AG04449 (cell line): ENCODE measurements at regions of chr12 and their contacts with region 1.

Region 1: DNA sequence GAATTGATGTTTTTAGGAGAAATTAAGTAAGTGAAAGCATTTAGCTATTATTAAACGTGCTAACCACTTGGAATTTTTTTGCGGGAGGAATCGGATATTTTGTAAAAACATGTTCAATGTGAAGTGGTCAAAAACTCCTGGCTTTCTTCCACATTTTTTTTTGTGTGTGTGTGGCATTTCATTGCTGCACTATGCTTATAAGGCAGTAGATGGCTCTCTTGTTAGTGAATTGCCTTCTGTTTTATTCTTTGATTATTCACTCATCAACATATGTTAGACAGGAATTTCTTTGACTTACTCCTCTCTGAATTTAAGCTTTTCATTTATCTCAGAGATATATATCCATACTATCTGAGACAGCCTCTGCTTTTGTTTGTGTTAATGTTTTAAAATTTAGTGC is 71.3 kb downstream of the DERA start:
- DNase-seq: no peak
- H3K4me3 ChIP-seq: no peak overlapping the region
- CTCF ChIP-seq: peak; percentile 54

Region 2: GRCh38 chr12:15996254-15996653 is 13.8 kb after region 1 on chr12:
- CTCF ChIA-PET with region 1: interaction called, 15 read pairs
- POLR2A ChIA-PET with region 1: no interaction called
- DNase-seq: peak; percentile 36
- H3K4me3 ChIP-seq: no peak overlapping the region
- CTCF ChIP-seq: no peak

Region 3: GRCh38 chr12:16062611-16063010 is 80.1 kb after region 1 on chr12:
- CTCF ChIA-PET with region 1: no interaction called
- POLR2A ChIA-PET with region 1: no interaction called
- DNase-seq: no peak
- H3K4me3 ChIP-seq: no peak overlapping the region
- CTCF ChIP-seq: no peak